ENCODE measurements at regions of chr9 and their contacts with region 1.

Region 1: DNA sequence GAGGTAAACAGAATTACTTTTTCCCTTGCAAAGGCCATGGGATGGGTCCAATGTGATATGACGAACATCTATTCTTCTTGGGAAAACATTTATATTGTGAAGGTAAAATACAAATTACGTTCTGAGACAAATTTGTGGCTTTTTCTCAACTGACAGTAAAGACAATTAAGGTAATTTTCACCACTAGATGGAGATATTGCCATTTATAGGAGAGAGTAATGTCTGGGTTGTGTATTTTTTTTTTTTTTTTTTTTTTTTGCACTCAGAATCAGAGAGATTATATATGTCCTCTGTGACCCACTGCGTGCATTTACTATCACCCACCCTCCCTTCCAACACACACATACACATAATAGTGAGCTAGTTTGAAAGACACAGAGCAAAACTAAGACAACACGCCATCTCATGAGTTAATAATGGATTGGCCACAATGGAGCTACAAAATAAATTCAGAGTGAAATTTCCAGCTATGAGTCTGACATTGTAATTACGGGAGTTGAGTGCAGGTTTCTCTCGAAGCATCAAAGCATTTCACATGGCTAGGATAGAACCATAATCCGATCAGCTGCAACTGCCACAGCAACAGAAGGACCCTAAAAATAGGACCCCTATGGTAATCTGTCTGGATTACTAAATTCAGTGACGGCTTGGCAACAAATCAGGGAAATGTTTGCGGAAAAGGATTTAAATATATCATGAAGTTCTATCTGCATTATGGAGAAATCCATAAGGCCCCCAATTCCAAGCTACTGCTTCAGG is 49.2 kb downstream of the ANXA1 start:
- DNase-seq: no peak
- H3K4me3 ChIP-seq: no peak overlapping the region
- H3K27ac ChIP-seq: no peak overlapping the region
- H3K4me1 ChIP-seq: no peaks in the 10 kb centered on the region
- H3K27me3 ChIP-seq: no peaks in the 10 kb centered on the region
- CTCF ChIP-seq: peak; percentile 59 to 63

Region 2: GRCh38 chr9:73081979-73082657 is 118.8 kb before region 1 on chr9:
- CTCF ChIA-PET with region 1: interaction called, 3 read pairs
- dilution Hi-C with region 1: no loop called
- in situ Hi-C with region 1: no loop called
- intact Hi-C with region 1: loop called (anchors 1 kb)
- DNase-seq: peak; percentile 24
- H3K4me3 ChIP-seq: no peak overlapping the region
- H3K27ac ChIP-seq: no peak overlapping the region
- H3K4me1 ChIP-seq: no peaks in the 10 kb centered on the region
- H3K27me3 ChIP-seq: peaks cover 4% of the 10 kb centered on the region
- CTCF ChIP-seq: peak; percentile 74 to 83

Region 3: GRCh38 chr9:73162987-73163768 is 37.7 kb before region 1 on chr9:
- CTCF ChIA-PET with region 1: no interaction called
- dilution Hi-C with region 1: no loop called
- in situ Hi-C with region 1: no loop called
- intact Hi-C with region 1: no loop called
- DNase-seq: peak; percentile 64
- H3K4me3 ChIP-seq: no peak overlapping the region
- H3K27ac ChIP-seq: no peak overlapping the region
- H3K4me1 ChIP-seq: no peaks in the 10 kb centered on the region
- H3K27me3 ChIP-seq: no peaks in the 10 kb centered on the region
- CTCF ChIP-seq: no peak

Region 4: GRCh38 chr9:73402081-73403028 is 201.5 kb after region 1 on chr9:
- CTCF ChIA-PET with region 1: no interaction called
- dilution Hi-C with region 1: no loop called
- in situ Hi-C with region 1: no loop called
- intact Hi-C with region 1: no loop called
- DNase-seq: no peak
- H3K4me3 ChIP-seq: no peak overlapping the region
- H3K27ac ChIP-seq: no peak overlapping the region
- H3K4me1 ChIP-seq: no peaks in the 10 kb centered on the region
- H3K27me3 ChIP-seq: no peaks in the 10 kb centered on the region
- CTCF ChIP-seq: no peak

Region 5: DNA sequence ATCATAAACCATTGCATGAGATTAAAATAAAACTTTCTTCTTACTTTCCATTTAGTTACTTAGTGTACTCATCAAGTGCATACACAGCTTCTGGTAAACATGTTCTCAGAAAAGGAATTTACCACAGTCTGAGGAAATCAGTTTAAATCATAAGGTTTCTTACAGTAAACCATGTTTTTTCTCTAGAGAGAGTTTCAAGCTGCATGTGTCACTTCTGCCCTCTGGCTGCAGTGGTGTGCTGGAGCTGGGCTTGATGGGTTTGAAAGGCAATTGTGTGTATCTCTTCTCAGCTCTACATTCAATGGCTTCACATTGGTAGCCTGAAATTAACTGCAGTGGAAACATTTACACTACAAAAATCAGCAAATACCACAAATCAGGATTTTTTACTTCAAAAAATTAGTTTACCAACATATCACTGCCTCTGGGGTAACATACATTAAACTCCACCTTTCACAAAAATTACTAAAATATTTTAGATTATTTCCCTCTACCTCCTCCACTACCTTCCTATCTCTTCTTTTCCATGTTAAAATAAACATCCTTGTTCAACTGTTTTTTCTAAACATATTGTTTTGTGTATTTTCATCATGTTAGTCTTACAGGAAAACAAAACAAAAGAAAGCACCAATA is 365.1 kb after region 1 on chr9:
- CTCF ChIA-PET with region 1: interaction called, 4 read pairs
- dilution Hi-C with region 1: no loop called
- in situ Hi-C with region 1: loop called in 1 of 2 experiments (anchors 25 kb)
- intact Hi-C with region 1: loop called (anchors 1 kb)
- DNase-seq: peak; percentile 54
- H3K4me3 ChIP-seq: no peak overlapping the region
- H3K27ac ChIP-seq: peak overlapping the region; percentile 61
- H3K4me1 ChIP-seq: peaks cover 7% of the 10 kb centered on the region
- H3K27me3 ChIP-seq: no peaks in the 10 kb centered on the region
- CTCF ChIP-seq: peak; percentile 80 to 91

Region 6: GRCh38 chr9:73667717-73668116 is 466.8 kb after region 1 on chr9:
- CTCF ChIA-PET with region 1: interaction called, 3 read pairs
- dilution Hi-C with region 1: no loop called
- in situ Hi-C with region 1: no loop called
- intact Hi-C with region 1: loop called (anchors 5 kb)
- DNase-seq: peak; percentile 40
- H3K4me3 ChIP-seq: no peak overlapping the region
- H3K27ac ChIP-seq: no peak overlapping the region
- H3K4me1 ChIP-seq: no peaks in the 10 kb centered on the region
- H3K27me3 ChIP-seq: no peaks in the 10 kb centered on the region
- CTCF ChIP-seq: peak; percentile 38 to 46

Region 7: DNA sequence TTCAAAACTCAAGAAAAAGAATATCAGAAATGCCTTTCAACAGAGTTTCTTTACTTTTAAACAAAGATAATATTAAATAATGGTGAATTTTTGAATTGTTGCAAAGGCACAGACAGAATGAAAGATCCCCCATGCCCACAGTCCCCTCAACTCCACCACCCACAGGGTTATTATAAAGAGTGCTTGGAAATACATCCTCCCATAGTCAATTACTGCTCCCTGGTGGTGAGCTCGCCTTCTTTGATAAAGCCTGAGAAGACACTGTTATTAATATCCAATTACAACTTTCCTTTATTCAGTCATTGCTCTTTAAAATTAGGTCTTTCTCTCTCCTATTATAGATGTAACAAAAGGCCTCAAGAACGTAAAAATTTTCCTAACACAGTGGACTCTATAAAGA is 806.1 kb after region 1 on chr9:
- CTCF ChIA-PET with region 1: no interaction called
- dilution Hi-C with region 1: no loop called
- in situ Hi-C with region 1: loop called in 1 of 2 experiments (anchors 25 kb)
- intact Hi-C with region 1: no loop called
- DNase-seq: no peak
- H3K4me3 ChIP-seq: no peak overlapping the region
- H3K27ac ChIP-seq: no peak overlapping the region
- H3K4me1 ChIP-seq: no peaks in the 10 kb centered on the region
- H3K27me3 ChIP-seq: no peaks in the 10 kb centered on the region
- CTCF ChIP-seq: peak in 1 of 2 donors; percentile 50

Region 8: DNA sequence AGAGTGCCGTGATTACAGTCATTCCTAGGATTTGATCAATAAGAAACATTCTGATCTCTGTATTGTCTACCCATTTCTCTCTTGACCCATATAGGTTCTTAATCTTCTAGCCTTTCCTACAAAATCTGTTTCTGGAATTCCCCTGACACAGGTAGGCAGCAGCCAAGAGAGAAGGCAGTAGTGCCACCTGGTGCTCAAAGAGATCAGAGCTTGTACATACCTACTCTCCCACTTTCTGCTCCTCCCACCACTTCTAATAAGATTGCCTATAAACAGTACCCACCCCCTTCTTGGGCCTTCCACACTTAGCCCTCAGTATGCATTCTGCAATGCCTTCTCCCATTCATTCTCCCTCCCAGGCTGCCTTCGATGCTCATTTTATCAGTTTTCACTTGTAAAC is 1178.8 kb after region 1 on chr9:
- CTCF ChIA-PET with region 1: interaction called, 4 read pairs
- dilution Hi-C with region 1: no loop called
- in situ Hi-C with region 1: no loop called
- intact Hi-C with region 1: loop called (anchors 2 kb)
- DNase-seq: peak; percentile 66
- H3K4me3 ChIP-seq: no peak overlapping the region
- H3K27ac ChIP-seq: no peak overlapping the region
- H3K4me1 ChIP-seq: peaks cover 3% of the 10 kb centered on the region
- H3K27me3 ChIP-seq: no peaks in the 10 kb centered on the region
- CTCF ChIP-seq: peak; percentile 70 to 77

Region 9: GRCh38 chr9:74645007-74645639 is 1444.2 kb after region 1 on chr9:
- CTCF ChIA-PET with region 1: no interaction called
- dilution Hi-C with region 1: no loop called
- in situ Hi-C with region 1: no loop called
- intact Hi-C with region 1: loop called (anchors 10 kb)
- DNase-seq: peak; percentile 5
- H3K4me3 ChIP-seq: no peak overlapping the region
- H3K27ac ChIP-seq: no peak overlapping the region
- H3K4me1 ChIP-seq: no peaks in the 10 kb centered on the region
- H3K27me3 ChIP-seq: no peaks in the 10 kb centered on the region
- CTCF ChIP-seq: peak; percentile 51 to 67